Right ventricle myocardium superior (tissue), 1 donor: ENCODE measurements at regions of chr11 and their contacts with region 1.

Region 1: GRCh38 chr11:30917859-30918478 is 331.8 kb upstream of the MPPED2 start:
- DNase-seq: no peak
- ATAC-seq: peak; percentile 66

Region 2: GRCh38 chr11:30346068-30346688 is 571.8 kb before region 1 on chr11:
- intact Hi-C with region 1: loop called (anchors 5 kb)
- DNase-seq: no peak
- ATAC-seq: peak; percentile 69

Region 3: GRCh38 chr11:30358536-30358935 is 559.4 kb before region 1 on chr11:
- intact Hi-C with region 1: loop called (anchors 5 kb)
- DNase-seq: peak; percentile 54
- ATAC-seq: peak; percentile 85

Region 4: DNA sequence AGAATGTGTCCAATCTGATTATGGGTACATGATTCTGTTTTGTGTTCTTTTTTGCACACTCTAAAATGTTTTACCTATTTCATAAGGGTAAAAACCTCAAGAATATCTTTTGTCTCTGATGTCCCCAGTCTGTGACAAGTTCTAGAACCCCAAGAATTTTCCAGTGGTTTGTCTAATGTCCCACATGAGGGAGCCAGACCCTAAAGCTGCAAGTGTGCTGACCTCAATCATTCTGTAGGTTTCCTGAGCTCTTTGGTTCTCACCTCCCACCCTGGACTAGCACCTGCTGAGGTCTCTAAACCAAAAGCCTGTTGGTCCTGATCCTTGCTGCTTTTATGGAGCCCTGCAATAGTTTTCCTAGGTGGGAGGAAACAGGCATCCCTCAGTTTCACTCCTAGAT is 182.0 kb before region 1 on chr11:
- intact Hi-C with region 1: loop called (anchors 10 kb)
- DNase-seq: no peak
- ATAC-seq: no peak

Region 5: GRCh38 chr11:30855383-30856006 is 62.5 kb before region 1 on chr11:
- intact Hi-C with region 1: loop called (anchors 10 kb)
- DNase-seq: no peak
- ATAC-seq: peak; percentile 45

Region 6: DNA sequence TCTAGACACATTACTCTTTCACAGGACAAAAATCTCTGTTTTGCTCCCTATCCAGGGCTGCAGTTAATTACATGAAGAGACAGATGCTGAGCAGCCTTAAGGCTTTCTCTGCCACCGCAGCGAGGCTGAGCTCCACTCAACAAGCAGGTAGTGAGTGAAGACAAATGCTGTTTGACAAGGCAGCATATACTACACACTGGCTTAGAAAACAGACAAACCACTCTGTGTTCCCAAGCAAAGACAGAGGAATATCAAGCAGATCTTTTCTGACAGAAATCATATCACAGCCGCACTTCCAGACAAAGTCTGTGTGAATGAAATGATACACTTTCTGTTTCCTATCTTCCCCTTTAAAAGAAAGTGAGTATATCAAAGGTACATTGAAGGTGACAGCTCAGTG is 83.5 kb after region 1 on chr11:
- intact Hi-C with region 1: no loop called
- DNase-seq: no peak
- ATAC-seq: no peak